K562 (cell line): ENCODE measurements at regions of chr6 and their contacts with region 1.

Region 1: DNA sequence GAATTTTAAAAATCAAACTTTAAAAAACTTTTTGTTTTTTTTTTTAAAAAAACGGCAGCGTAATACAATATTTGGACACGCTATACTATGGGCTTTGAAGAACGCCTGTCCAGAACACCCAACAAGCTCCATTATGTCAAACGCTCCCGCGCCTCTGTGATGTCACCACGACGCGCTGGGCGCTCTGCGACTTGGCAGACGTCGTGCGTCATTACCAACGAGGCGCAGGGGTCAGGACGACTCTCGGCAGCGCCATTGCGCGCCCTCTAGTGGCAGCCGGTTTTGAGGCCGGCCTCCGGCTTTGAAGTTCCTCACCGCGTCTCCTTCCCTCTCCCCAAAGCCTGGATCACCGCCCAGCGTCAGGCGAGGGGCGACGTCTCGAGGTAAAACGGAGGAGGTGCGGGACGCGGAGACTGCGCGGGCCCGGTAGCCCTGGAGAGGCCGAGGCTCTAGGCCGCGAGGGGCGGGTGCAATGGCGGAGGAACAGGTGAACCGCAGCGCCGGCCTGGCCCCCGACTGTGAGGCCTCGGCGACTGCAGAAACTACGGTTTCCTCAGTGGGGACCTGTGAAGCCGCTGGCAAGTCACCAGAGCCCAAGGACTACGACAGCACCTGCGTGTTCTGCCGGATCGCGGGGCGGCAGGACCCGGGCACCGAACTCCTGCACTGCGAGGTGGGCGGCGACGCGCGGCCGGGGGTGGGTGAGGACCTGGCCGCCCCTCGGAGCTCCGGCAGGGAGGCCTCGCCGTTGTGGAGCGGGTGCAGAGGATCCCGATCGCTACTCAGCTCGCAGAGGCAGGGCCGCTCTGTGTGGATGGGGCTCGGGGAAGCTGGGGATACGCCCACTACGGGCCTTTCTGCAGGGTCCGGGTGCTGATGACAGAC is at the start of gene HINT3:
- DNase-seq: peak; percentile 84 to 100 (median 88)
- ATAC-seq: peak; percentile 86
- H3K4me3 ChIP-seq: peak within 1 kb of the TSS; percentile 86
- H3K27ac ChIP-seq: peak within 1 kb of the TSS; percentile 89
- H3K4me1 ChIP-seq: peaks cover 30 to 34% of the 10 kb centered on the region in 2 experiments; a peak in 4 of 5 replicates
- H3K27me3 ChIP-seq: no peaks in the 10 kb centered on the region
- CTCF ChIP-seq: peak; percentile 98 to 99 (median 99)
- EP300 ChIP-seq: peak; percentile 76
- POLR2A ChIP-seq: peak; percentile 75
- RAD21 ChIP-seq: peak; percentile 98
- polyA plus RNA-seq, gene HINT3: 1.4 to 1.9 TPM

Region 2: GRCh38 chr6:125307150-125307838 is 649.5 kb before region 1 on chr6:
- CTCF ChIA-PET with region 1: no interaction called
- POLR2A ChIA-PET with region 1: no interaction called
- in situ Hi-C with region 1: no loop called
- intact Hi-C with region 1: loop called (anchors 5 kb)
- DNase-seq: peak; percentile 73 to 91 (median 82)
- ATAC-seq: peak; percentile 80
- H3K4me3 ChIP-seq: 0 out of 2 replicates have a peak overlapping the region, but pooled peaks have one; percentile 3
- H3K27ac ChIP-seq: peak overlapping the region; percentile 84
- H3K4me1 ChIP-seq: peaks cover 8 to 45% of the 10 kb centered on the region in 2 experiments; a peak in 4 of 5 replicates
- H3K27me3 ChIP-seq: no peaks in the 10 kb centered on the region
- CTCF ChIP-seq: no peak
- EP300 ChIP-seq: peak; percentile 98
- POLR2A ChIP-seq: no peak
- RAD21 ChIP-seq: peak in 1 of 2 experiments; percentile 24; a peak in 1 of 4 replicates

Region 3: DNA sequence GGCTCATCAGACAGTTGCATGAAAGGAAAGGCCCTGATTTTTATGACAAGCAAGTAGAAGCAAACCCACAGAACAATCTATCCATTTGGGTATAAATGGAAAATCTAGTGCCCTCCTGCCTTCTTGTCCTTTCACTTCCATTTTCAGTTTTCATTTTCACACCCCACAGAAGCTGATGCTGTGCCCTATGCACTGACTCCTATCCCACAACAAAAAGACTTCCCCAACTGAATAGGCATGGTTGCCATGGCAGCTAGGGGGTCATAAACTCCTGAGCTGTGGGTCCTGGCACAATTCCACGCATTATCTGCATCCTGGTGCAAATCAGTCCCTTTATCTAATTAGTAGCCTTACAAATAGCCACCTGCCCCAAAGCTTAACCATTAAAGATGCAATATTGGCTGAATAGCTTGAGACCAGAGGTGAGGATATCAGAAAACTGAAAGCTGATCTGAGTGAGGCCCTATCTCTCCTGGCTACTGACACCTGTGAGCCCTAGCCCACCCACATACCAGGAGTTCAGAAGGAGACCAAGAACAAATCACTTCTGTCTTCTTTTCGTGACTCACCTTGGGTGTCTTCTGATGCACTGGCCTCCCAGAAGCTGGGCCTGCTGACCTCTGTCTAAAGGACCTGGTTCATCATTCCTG is 242.2 kb before region 1 on chr6:
- CTCF ChIA-PET with region 1: no interaction called
- POLR2A ChIA-PET with region 1: no interaction called
- in situ Hi-C with region 1: no loop called
- intact Hi-C with region 1: no loop called
- DNase-seq: no peak
- ATAC-seq: no peak
- H3K4me3 ChIP-seq: no peak overlapping the region
- H3K27ac ChIP-seq: no peak overlapping the region
- H3K4me1 ChIP-seq: no peaks in the 10 kb centered on the region; a peak in 1 of 5 replicates
- H3K27me3 ChIP-seq: no peaks in the 10 kb centered on the region
- CTCF ChIP-seq: no peak
- EP300 ChIP-seq: no peak
- POLR2A ChIP-seq: no peak
- RAD21 ChIP-seq: no peak

Region 4: GRCh38 chr6:125790358-125791150 is 166.2 kb before region 1 on chr6 and contains the start of gene NCOA7:
- CTCF ChIA-PET with region 1: interaction called, 9 read pairs
- POLR2A ChIA-PET with region 1: interaction called, 12 read pairs
- in situ Hi-C with region 1: no loop called
- intact Hi-C with region 1: loop called (anchors 2 kb)
- DNase-seq: peak; percentile 78 to 88 (median 84)
- ATAC-seq: peak; percentile 84
- H3K4me3 ChIP-seq: peak within 1 kb of the TSS; percentile 82
- H3K27ac ChIP-seq: peak within 1 kb of the TSS; percentile 96
- H3K4me1 ChIP-seq: peaks cover 17 to 18% of the 10 kb centered on the region in 2 experiments
- H3K27me3 ChIP-seq: no peaks in the 10 kb centered on the region
- CTCF ChIP-seq: peak in 1 of 3 experiments; percentile 10; a peak in 1 of 6 replicates
- EP300 ChIP-seq: no peak
- POLR2A ChIP-seq: peak; percentile 63
- RAD21 ChIP-seq: 0 out of 4 replicates have a peak, but pooled peaks of 1 of the 2 experiments have one; percentile 9
- polyA plus RNA-seq, gene NCOA7: 5.8 to 7.0 TPM

Region 5: DNA sequence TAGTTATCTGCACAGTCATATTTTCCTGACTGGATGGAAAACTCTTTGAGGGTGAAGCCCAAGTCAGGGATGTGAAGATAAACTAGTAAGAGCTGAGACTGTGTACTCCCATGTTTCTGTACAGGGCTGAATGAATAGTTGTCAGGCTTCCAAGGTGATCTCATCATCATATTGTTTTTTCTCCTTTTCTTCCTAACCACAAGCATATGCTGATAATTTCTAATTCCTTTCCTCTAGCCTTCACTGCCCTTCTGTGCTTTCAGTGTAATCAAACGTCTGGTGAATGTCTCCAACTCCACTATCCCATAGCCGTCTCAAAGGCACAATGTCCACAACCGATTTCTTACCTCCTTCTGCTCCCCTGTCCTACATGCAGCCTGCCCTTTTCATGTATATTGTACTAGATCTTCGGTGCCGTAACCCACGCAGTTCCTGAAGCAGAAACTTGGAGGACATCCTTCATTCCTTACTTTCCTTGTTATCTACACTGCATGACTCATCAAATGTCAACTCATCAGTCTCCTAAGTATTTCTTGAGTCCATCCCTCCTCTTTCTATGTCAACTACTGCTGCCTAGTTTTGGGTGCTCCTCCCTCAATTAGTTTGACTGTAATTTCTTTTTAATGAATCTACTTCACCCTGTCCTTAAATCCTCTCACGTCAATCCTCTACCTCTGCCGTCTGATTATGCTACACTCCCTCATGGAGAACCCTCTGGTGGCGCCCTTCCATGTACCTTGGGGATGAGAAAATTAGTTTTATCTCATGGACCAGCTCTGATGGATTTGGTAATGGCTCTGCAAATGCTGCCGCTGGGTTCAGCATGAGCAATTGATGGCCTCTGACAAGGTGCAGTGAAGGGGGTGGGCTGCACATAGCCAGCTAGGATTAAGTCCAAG is 144.1 kb before region 1 on chr6:
- CTCF ChIA-PET with region 1: no interaction called
- POLR2A ChIA-PET with region 1: no interaction called
- in situ Hi-C with region 1: no loop called
- intact Hi-C with region 1: no loop called
- DNase-seq: peak; percentile 62 to 82 (median 70)
- ATAC-seq: peak; percentile 82
- H3K4me3 ChIP-seq: 0 out of 2 replicates have a peak overlapping the region, but pooled peaks have one; percentile 16
- H3K27ac ChIP-seq: peak overlapping the region; percentile 81
- H3K4me1 ChIP-seq: peaks cover 14 to 32% of the 10 kb centered on the region in 2 experiments; a peak in 4 of 5 replicates
- H3K27me3 ChIP-seq: no peaks in the 10 kb centered on the region
- CTCF ChIP-seq: 0 out of 6 replicates have a peak, but pooled peaks of 1 of the 3 experiments have one; percentile 13
- EP300 ChIP-seq: peak; percentile 31; the same call in 1 of the 2 replicates
- POLR2A ChIP-seq: no peak
- RAD21 ChIP-seq: no peak

Region 6: DNA sequence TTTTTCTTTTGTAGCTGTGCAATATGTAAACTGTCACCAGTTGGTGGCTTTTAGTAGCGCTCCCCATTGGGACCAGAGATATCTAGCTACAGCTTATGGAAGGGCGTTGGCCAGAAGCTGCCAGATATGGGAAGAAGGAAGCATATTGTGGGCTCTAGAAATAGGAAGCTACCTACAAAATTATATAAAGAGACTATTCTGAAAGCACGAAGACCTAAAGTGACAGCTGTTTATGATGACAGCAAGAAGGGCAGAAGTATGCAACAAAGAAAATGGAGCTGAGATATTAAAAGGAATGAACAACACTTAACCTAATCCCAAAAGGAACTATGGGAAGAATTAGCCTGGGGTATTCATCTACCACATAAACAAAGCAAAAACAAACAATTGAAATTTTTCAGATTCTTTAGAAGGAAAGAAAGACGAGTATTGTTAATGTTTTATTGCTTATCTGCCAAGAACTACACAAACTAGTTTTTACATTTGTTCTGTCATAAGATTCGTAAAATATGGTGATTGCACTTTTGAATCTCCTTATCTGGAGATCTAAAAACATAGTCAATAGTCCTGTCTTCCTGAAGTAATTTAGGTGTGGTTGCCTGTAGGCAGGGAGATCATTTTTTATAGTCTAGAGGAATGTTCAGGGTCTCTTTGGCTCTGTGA is 84.4 kb before region 1 on chr6:
- CTCF ChIA-PET with region 1: no interaction called
- POLR2A ChIA-PET with region 1: no interaction called
- in situ Hi-C with region 1: no loop called
- intact Hi-C with region 1: loop called (anchors 2 kb)
- DNase-seq: peak; percentile 49 to 86 (median 68)
- ATAC-seq: peak; percentile 95
- H3K4me3 ChIP-seq: no peak overlapping the region
- H3K27ac ChIP-seq: peak overlapping the region; percentile 71
- H3K4me1 ChIP-seq: peaks cover 9 to 26% of the 10 kb centered on the region in 2 experiments; a peak in 4 of 5 replicates
- H3K27me3 ChIP-seq: no peaks in the 10 kb centered on the region
- CTCF ChIP-seq: peak in 2 of 3 experiments; percentile 37 to 38; a peak in 3 of 6 replicates
- EP300 ChIP-seq: peak; percentile 76
- POLR2A ChIP-seq: no peak
- RAD21 ChIP-seq: peak in 1 of 2 experiments; percentile 31; a peak in 2 of 4 replicates

Region 7: DNA sequence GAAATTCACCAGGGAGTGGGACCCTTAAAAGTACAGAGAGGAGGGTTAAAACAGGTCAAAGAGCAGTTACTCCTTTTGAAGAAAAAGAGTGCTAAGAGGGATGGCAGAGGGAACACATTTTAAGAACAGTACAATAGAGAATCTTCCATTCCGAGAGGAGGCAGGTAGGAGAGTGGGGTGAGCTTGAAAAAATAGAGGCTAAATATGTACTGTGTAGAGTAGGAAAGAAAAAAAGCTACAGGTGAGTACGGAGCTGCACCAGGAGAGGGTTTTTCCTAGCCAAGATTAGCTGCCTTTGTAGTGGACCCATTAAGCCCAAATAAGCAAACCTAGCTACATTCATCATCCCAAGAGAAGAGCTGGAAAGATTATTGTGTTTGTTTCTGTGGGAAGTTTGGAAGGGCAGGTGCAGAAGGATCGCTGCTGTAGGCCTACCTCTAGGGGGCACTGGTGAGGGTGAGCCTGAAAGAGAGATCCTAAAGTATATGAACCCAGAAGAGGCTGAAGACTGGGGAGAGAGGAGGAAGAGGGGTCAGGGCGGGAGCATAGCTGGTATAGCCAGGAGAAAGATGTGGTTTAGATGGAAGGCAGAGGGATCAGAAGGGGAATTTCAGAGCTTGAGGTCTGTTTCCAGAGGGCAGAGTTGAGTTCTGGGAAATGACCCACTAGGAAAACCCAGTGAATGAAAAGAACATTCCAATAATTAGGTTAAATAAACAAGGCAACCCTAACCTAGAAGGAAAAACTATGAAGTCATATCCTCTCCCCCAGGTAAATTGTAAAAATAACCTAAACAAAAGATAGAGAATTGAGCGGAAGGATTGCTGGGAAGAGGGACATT is 50.4 kb before region 1 on chr6:
- CTCF ChIA-PET with region 1: interaction called, 8 read pairs
- POLR2A ChIA-PET with region 1: interaction called, 4 read pairs
- in situ Hi-C with region 1: no loop called
- intact Hi-C with region 1: loop called (anchors 1 kb)
- DNase-seq: peak; percentile 70 to 80 (median 76)
- ATAC-seq: peak; percentile 91
- H3K4me3 ChIP-seq: no peak overlapping the region
- H3K27ac ChIP-seq: no peak overlapping the region
- H3K4me1 ChIP-seq: peaks cover 5 to 6% of the 10 kb centered on the region in 2 experiments; a peak in 3 of 5 replicates
- H3K27me3 ChIP-seq: no peaks in the 10 kb centered on the region
- CTCF ChIP-seq: peak; percentile 79 to 92 (median 84)
- EP300 ChIP-seq: no peak
- POLR2A ChIP-seq: no peak
- RAD21 ChIP-seq: peak; percentile 57 to 66

Region 8: GRCh38 chr6:125944434-125944816 is 12.3 kb before region 1 on chr6:
- CTCF ChIA-PET with region 1: no interaction called
- POLR2A ChIA-PET with region 1: interaction called, 18 read pairs
- in situ Hi-C with region 1: no loop called
- intact Hi-C with region 1: no loop called
- DNase-seq: peak in 1 of 4 experiments; percentile 30
- ATAC-seq: peak; percentile 4; the same call in 1 of the 3 replicates
- H3K4me3 ChIP-seq: no peak overlapping the region
- H3K27ac ChIP-seq: peak overlapping the region; percentile 70
- H3K4me1 ChIP-seq: peaks cover 18 to 82% of the 10 kb centered on the region in 2 experiments
- H3K27me3 ChIP-seq: no peaks in the 10 kb centered on the region
- CTCF ChIP-seq: no peak
- EP300 ChIP-seq: 0 out of 2 replicates have a peak, but pooled peaks have one; percentile 21
- POLR2A ChIP-seq: no peak
- RAD21 ChIP-seq: no peak

Region 9: DNA sequence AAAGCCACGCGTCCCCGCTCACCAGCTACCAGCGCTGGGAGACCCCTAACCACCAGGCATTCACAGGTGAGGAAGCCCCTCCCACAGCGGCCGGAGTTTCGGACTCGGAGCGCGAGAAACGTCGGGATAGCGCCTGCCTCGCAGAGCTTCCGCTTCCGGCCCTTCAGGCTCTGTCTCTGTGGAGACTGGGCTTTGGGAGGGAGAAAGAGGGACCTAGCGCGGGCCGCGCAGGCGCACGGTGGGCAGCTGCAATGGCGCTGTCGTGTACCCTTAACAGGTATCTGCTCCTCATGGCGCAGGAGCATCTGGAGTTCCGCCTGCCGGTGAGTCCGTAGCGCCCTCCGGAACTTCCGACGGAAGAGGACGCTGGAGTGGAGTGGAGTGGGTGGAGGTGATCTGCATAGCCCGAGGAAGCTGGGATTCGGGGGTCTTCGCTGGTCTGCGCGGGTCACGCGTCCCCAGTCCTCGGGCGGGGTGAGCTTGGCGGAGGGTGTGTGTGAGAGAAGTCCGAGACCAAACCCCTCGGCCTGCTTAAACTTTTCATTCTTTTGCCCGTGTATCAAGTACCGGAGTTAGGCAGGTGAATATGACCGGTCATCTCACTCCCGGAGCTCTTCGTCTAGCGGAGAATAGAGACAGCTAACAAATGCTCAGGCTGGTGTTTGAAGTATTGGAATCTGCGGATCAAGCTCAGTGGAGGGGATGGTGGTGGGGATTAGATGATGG is 29.7 kb after region 1 on chr6 and contains the start of gene TRMT11:
- CTCF ChIA-PET with region 1: no interaction called
- POLR2A ChIA-PET with region 1: interaction called, 11 read pairs
- in situ Hi-C with region 1: no loop called
- intact Hi-C with region 1: no loop called
- DNase-seq: peak; percentile 93 to 97 (median 95)
- ATAC-seq: peak; percentile 95
- H3K4me3 ChIP-seq: peak within 1 kb of the TSS; percentile 62
- H3K27ac ChIP-seq: peak within 1 kb of the TSS; percentile 79
- H3K4me1 ChIP-seq: peaks cover 14 to 30% of the 10 kb centered on the region in 2 experiments
- H3K27me3 ChIP-seq: no peaks in the 10 kb centered on the region
- CTCF ChIP-seq: 0 out of 6 replicates have a peak, but pooled peaks of 1 of the 3 experiments have one; percentile 6
- EP300 ChIP-seq: no peak
- POLR2A ChIP-seq: peak; percentile 97
- RAD21 ChIP-seq: no peak
- polyA plus RNA-seq, gene TRMT11: 72.4 to 76.3 TPM

Region 10: DNA sequence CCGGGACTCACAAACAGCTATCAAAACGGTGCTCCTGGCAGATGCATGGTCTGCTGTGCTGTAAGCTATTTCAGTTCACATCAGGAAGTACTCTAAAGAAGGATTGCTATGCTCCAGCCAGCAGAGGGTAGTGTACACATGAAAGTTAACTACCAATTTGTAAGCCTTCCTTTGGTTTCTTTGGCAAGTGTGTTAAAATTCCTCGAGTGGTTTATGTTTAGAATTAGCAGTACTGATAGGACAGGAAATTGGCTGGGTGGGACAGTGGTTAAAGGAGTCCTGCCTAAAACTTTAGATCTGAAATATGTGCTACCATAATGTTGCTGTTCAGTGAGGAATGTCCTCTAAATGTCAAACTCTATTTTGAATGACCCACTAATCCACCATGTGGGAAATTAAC is 76.9 kb after region 1 on chr6:
- CTCF ChIA-PET with region 1: no interaction called
- POLR2A ChIA-PET with region 1: no interaction called
- in situ Hi-C with region 1: no loop called
- intact Hi-C with region 1: no loop called
- DNase-seq: peak; percentile 28 to 76 (median 51)
- ATAC-seq: peak; percentile 99
- H3K4me3 ChIP-seq: no peak overlapping the region
- H3K27ac ChIP-seq: peak overlapping the region; percentile 18; the same call in 1 of the 3 replicates
- H3K4me1 ChIP-seq: peaks cover 0 to 8% of the 10 kb centered on the region in 2 experiments; a peak in 2 of 5 replicates
- H3K27me3 ChIP-seq: no peaks in the 10 kb centered on the region
- CTCF ChIP-seq: peak; percentile 60 to 81 (median 75)
- EP300 ChIP-seq: no peak
- POLR2A ChIP-seq: no peak
- RAD21 ChIP-seq: peak; percentile 95

Region 11: GRCh38 chr6:126118058-126118755 is 161.5 kb after region 1 on chr6:
- CTCF ChIA-PET with region 1: no interaction called
- POLR2A ChIA-PET with region 1: no interaction called
- in situ Hi-C with region 1: no loop called
- intact Hi-C with region 1: no loop called
- DNase-seq: peak in 3 of 4 experiments; percentile 23 to 81 (median 71)
- ATAC-seq: peak; percentile 86
- H3K4me3 ChIP-seq: no peak overlapping the region
- H3K27ac ChIP-seq: no peak overlapping the region
- H3K4me1 ChIP-seq: peaks cover 5 to 37% of the 10 kb centered on the region in 2 experiments; a peak in 4 of 5 replicates
- H3K27me3 ChIP-seq: no peaks in the 10 kb centered on the region
- CTCF ChIP-seq: peak in 1 of 3 experiments; percentile 6; a peak in 1 of 6 replicates
- EP300 ChIP-seq: peak; percentile 91
- POLR2A ChIP-seq: no peak
- RAD21 ChIP-seq: no peak; a peak in 1 of 4 replicates